Posterior cingulate gyrus (tissue), 11 donors: ENCODE measurements at regions of chr5 and their contacts with region 1.

Region 1: GRCh38 chr5:65760504-65761275 is 38.7 kb downstream of the NLN start:
- DNase-seq: peak in 9 of 10 donors; percentile 11 to 91 (median 56)

Region 2: GRCh38 chr5:66144074-66144833 is 383.6 kb after region 1 on chr5 and contains the start of gene SREK1:
- intact Hi-C with region 1: loop called (anchors 10 kb)
- DNase-seq: peak; percentile 85 to 98 (median 90)